K562 (cell line): ENCODE measurements at regions of chr5 and their contacts with region 1.

Region 1: GRCh38 chr5:148639081-148639480 is 15.2 kb downstream of the HTR4 start:
- DNase-seq: peak; percentile 93 to 97 (median 95)
- ATAC-seq: peak; percentile 95
- H3K4me3 ChIP-seq: no peak overlapping the region
- H3K27ac ChIP-seq: peak overlapping the region; percentile 71
- H3K4me1 ChIP-seq: peaks cover 4 to 31% of the 10 kb centered on the region in 2 experiments; a peak in 4 of 5 replicates
- H3K27me3 ChIP-seq: no peaks in the 10 kb centered on the region
- CTCF ChIP-seq: no peak
- EP300 ChIP-seq: peak; percentile 95
- POLR2A ChIP-seq: no peak
- RAD21 ChIP-seq: no peak

Region 2: GRCh38 chr5:148623741-148624140 is 15.3 kb before region 1 on chr5:
- CTCF ChIA-PET with region 1: no interaction called
- POLR2A ChIA-PET with region 1: interaction called, 13 read pairs
- in situ Hi-C with region 1: no loop called
- intact Hi-C with region 1: loop called (anchors 2 kb)
- DNase-seq: peak in 3 of 4 experiments; percentile 19 to 41 (median 24)
- ATAC-seq: no peak; the same call in 2 of the 3 replicates
- H3K4me3 ChIP-seq: no peak overlapping the region
- H3K27ac ChIP-seq: no peak overlapping the region
- H3K4me1 ChIP-seq: peaks cover 0 to 16% of the 10 kb centered on the region in 2 experiments; a peak in 2 of 5 replicates
- H3K27me3 ChIP-seq: no peaks in the 10 kb centered on the region
- CTCF ChIP-seq: no peak
- EP300 ChIP-seq: peak; percentile 33; the same call in 1 of the 2 replicates
- POLR2A ChIP-seq: no peak
- RAD21 ChIP-seq: no peak

Region 3: GRCh38 chr5:148682058-148683026 is 43.3 kb after region 1 on chr5:
- CTCF ChIA-PET with region 1: no interaction called
- POLR2A ChIA-PET with region 1: no interaction called
- in situ Hi-C with region 1: no loop called
- intact Hi-C with region 1: loop called (anchors 1 kb)
- DNase-seq: peak; percentile 67 to 91 (median 78)
- ATAC-seq: peak; percentile 91
- H3K4me3 ChIP-seq: no peak overlapping the region
- H3K27ac ChIP-seq: peak overlapping the region; percentile 54
- H3K4me1 ChIP-seq: peaks cover 0 to 38% of the 10 kb centered on the region in 2 experiments; a peak in 3 of 5 replicates
- H3K27me3 ChIP-seq: no peaks in the 10 kb centered on the region
- CTCF ChIP-seq: no peak
- EP300 ChIP-seq: peak; percentile 90
- POLR2A ChIP-seq: no peak
- RAD21 ChIP-seq: no peak; a peak in 1 of 4 replicates